Activated naive CD4-positive, alpha-beta T cell treated with anti-CD3 and anti-CD28 coated beads for 36 hours (primary cell): ENCODE measurements at regions of chr11 and their contacts with region 1.

Region 1: GRCh38 chr11:16605894-16606783 is 132.3 kb upstream of the C11orf58 start:
- DNase-seq: peak; percentile 93
- H3K4me3 Mint-ChIP-seq: peak overlapping the region; percentile 56
- H3K27ac Mint-ChIP-seq: peak overlapping the region; percentile 15
- H3K4me1 Mint-ChIP-seq: peaks cover 20% of the 10 kb centered on the region
- H3K27me3 Mint-ChIP-seq: peaks cover 46% of the 10 kb centered on the region

Region 2: DNA sequence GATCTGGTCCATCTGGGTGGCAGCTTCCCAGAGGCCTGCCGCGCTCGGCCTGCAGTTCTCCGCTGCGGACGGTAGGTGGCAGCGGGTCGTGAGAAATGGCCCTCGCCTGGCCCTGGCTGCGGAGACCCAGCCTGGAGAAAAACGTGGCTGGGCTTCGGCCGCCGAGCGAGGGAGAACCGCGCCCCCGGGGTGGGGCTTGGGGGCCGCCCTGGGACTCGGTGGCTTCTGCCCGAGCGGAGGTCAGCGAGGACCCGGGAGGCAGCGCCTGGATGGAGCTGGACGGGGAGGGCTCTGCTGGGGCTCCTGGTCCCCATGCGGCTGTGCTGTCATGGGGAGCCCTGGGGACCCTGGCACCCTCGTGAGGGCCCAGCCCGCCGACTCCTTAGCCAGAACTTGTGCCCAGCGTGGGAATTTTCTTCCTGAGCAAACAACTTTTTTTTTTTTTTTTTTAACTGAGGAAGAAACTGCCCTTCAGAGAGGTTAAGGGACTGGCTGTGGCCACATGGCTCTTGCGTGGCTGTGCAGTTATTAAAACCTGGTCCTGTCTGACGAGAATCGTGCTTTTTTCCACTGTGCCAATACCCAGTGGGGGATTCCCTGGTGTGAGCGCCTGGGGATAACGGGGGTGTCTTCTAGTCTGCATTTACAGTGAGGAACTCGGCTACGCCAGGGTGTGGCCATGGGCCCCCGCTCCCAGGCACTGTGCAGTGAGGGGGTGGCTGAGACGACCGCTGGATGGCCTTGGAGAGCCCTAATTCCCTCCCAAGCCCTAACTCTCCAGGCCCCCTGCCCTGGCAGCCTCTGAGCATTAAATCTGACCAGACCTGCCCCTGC is 955.8 kb before region 1 on chr11:
- CTCF ChIA-PET with region 1: no interaction called
- intact Hi-C with region 1: loop called (anchors 1 kb)
- DNase-seq: peak; percentile 78
- H3K4me3 Mint-ChIP-seq: no peak overlapping the region
- H3K27ac Mint-ChIP-seq: no peak overlapping the region
- H3K4me1 Mint-ChIP-seq: peaks cover 4% of the 10 kb centered on the region
- H3K27me3 Mint-ChIP-seq: peaks cover 22% of the 10 kb centered on the region

Region 3: DNA sequence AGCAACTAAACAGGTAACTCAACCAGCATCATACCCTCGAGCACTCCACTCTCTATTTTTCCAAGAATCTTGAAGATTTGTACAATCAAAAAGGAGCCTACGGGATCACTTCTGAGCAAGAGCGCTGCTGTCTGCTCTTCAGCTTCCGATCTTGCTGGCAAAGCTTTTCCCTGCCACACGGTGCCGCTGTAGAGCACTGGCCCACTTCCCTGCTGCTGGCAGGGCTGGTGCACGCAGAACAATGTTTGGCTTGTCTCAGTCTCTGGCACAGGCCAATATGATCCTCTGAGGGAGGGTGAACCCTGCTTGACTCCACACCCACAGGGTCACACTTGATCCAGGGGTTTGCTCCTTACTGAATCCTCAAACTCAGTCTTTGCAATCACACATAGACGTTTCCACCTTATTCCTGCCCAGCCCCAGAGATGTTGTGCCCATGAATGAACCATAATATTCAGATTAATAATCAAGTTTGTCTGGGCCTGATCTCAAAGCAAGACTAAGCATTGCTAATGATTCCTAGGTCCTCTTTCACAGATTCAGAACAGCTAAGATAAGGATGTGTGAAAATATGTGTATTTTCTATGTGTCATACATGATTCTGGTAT is 786.4 kb before region 1 on chr11:
- CTCF ChIA-PET with region 1: no interaction called
- intact Hi-C with region 1: loop called (anchors 1 kb)
- DNase-seq: peak; percentile 46
- H3K4me3 Mint-ChIP-seq: no peak overlapping the region
- H3K27ac Mint-ChIP-seq: no peak overlapping the region
- H3K4me1 Mint-ChIP-seq: no peaks in the 10 kb centered on the region
- H3K27me3 Mint-ChIP-seq: peaks cover 19% of the 10 kb centered on the region

Region 4: GRCh38 chr11:16191212-16191867 is 414.8 kb before region 1 on chr11:
- CTCF ChIA-PET with region 1: no interaction called
- intact Hi-C with region 1: loop called (anchors 10 kb)
- DNase-seq: no peak
- H3K4me3 Mint-ChIP-seq: no peak overlapping the region
- H3K27ac Mint-ChIP-seq: no peak overlapping the region
- H3K4me1 Mint-ChIP-seq: no peaks in the 10 kb centered on the region
- H3K27me3 Mint-ChIP-seq: no peaks in the 10 kb centered on the region

Region 5: GRCh38 chr11:16902781-16903378 is 296.7 kb after region 1 on chr11:
- CTCF ChIA-PET with region 1: no interaction called
- intact Hi-C with region 1: loop called (anchors 5 kb)
- DNase-seq: peak; percentile 30
- H3K4me3 Mint-ChIP-seq: peak overlapping the region; percentile 3
- H3K27ac Mint-ChIP-seq: peak overlapping the region; percentile 92
- H3K4me1 Mint-ChIP-seq: peaks cover 43% of the 10 kb centered on the region
- H3K27me3 Mint-ChIP-seq: no peaks in the 10 kb centered on the region